HEK293T (cell line): ENCODE measurements at regions of chr20 and their contacts with region 1.

Region 1: DNA sequence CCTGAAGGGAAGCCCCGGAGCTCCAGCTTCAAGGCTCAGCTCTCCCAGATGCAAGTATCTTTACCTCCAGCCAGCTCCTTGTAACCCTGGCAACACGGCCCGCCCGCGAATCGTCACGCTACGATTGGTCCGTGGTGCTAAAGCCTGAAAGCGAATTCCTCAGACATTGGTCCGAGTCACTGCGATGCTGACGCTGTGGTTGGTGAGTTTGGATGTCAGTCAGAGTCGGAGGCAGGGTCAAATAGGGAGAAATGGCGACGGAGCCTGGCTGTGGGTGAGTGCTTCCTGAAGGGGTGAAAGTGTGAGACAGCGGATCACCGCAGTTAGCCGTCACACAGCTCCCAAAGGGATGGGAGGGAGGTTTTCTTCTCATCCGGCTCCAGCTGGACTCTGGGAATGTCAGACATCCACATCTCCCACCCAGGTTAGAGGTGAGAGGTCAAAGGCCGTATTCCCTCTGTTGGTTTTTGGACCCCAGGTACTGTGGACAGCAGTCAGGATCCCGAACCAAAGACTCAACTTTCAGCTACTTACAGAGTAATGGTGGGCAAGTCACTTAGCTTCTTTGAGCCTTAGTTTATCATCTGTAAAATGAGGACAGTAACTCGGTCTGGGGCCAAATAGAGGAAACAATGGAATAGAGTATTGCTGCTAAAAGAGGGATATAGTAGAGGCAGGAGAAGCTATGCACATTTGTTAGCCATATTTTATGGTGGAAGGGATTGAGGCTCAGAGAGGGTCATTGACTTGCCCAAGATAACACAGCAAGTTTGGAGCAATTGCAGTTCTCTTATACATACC is at the start of gene ZSWIM1:
- DNase-seq: peak; percentile 99

Region 2: GRCh38 chr20:45890985-45891983 is 10.1 kb after region 1 on chr20 and contains the starts of genes CTSA and NEURL2:
- CTCF ChIA-PET with region 1: interaction called, 3 read pairs
- POLR2A ChIA-PET with region 1: interaction called, 30 read pairs
- DNase-seq: peak; percentile 89

Region 3: GRCh38 chr20:45905505-45906079 is 24.4 kb after region 1 on chr20:
- CTCF ChIA-PET with region 1: no interaction called
- POLR2A ChIA-PET with region 1: interaction called, 16 read pairs
- DNase-seq: no peak